Caco-2 (cell line): ENCODE measurements at regions of chr10 and their contacts with region 1.

Region 1: DNA sequence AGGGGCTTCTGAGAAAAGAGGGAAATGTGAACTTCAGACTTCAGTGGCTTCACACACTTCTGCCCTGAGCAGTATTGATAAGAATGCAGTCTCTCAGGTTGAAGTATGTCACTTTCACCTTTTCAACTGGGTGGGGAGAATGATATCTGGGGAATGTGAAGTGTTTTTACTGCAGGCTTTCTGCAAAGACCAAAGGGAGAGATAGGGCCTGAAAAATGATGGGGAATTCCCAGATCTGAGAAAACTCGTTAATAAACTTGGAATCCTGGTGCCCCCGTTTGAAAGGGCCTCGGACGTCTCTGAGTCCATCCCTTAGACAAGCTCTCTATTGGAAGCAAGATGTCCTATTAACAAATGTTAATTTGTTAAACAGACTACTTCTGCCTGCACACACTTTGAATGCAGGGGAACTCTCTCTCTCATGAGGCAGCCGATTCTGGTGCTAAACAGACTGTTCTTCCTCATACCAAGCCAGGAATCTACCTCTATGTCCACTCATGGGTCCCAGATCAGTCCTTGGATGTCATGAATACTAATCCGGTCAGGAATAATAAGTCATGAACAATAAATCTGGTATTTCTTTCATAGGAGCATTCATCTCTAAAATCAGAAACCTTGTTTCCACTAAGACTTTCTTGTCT is 193.6 kb downstream of the JCAD start:
- DNase-seq: peak; percentile 89 to 92
- H3K4me3 ChIP-seq: no peak overlapping the region
- H3K4me3 Mint-ChIP-seq: peak overlapping the region; percentile 42
- H3K27ac Mint-ChIP-seq: peak overlapping the region; percentile 95
- H3K4me1 ChIP-seq: peaks cover 64% of the 10 kb centered on the region
- H3K4me1 Mint-ChIP-seq: peaks cover 47% of the 10 kb centered on the region
- H3K27me3 ChIP-seq: no peaks in the 10 kb centered on the region
- H3K27me3 Mint-ChIP-seq: no peaks in the 10 kb centered on the region
- CTCF ChIP-seq: no peak

Region 2: DNA sequence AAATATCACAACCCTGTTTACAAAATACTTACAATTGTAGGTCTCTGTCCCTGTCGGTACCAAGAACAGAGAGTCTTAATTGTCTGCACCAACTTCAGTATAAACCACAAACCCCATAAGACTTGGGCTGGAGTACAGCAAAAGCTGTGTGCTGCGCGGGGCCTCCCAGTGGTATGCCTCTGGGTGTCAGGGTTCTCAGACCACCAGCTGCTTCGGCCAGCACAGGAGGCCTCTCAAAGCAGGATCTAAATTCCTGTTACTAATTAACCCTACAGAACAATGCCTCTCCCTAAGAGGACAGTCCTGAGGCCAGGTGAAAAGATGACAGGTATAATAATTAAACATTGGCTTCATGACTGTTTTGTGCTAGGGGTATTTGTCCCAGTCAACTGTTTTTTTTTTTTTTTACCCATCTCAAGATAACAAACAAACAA is 230.1 kb before region 1 on chr10:
- CTCF ChIA-PET with region 1: no interaction called
- POLR2A ChIA-PET with region 1: no interaction called
- intact Hi-C with region 1: loop called (anchors 2 kb)
- DNase-seq: peak; percentile 88 to 93
- H3K4me3 ChIP-seq: peak overlapping the region; percentile 23
- H3K4me3 Mint-ChIP-seq: peak overlapping the region; percentile 69
- H3K27ac Mint-ChIP-seq: peak overlapping the region; percentile 85
- H3K4me1 ChIP-seq: peaks cover 38% of the 10 kb centered on the region
- H3K4me1 Mint-ChIP-seq: peaks cover 48% of the 10 kb centered on the region
- H3K27me3 ChIP-seq: no peaks in the 10 kb centered on the region
- H3K27me3 Mint-ChIP-seq: no peaks in the 10 kb centered on the region
- CTCF ChIP-seq: peak in 1 of 2 experiments; percentile 50

Region 3: DNA sequence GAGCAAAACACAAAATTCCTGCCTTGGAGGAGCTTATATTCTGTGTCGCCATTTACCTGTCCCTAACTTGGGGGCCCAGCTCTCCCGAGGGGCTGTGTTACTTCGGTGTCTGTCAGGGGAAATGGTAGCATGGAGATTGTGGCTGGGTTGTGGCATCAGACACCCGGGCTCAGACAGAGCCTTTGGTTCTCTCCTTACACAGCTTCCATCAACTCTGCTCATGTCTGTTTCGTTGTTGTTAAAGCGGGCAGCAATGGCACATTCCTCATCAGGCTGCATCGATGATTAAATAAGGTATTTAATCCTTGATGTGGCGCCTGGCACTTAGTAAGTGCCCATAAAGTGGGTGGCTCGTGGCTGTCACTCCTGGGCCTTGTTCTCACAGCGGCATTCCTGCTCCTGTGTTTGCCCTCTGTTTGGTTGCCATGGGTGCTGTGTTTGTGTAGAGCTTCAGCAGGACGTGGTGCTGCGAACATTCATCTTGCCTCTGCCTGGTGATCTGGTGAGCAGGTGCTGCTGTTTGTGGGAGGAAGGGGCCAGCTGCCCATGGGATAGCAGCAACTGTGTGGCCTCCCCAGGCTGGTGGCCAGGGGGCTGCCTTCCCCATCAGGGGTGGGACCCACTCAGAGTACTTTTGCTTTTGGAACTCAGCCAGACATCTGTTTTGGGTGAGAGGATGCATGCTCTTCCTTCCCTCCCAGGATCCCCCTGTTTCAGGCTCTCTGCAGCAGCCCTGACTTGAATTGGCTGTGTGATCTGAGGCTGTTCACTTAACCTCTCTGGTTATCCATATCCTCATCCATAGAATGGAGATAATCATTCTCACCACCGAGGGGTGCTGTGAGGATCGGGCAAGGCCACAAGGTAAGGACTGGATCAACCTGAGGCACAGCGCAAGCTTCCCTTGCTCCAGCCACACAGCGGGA is 23.8 kb before region 1 on chr10:
- CTCF ChIA-PET with region 1: no interaction called
- POLR2A ChIA-PET with region 1: interaction called, 3 read pairs
- intact Hi-C with region 1: loop called (anchors 1 kb)
- DNase-seq: peak; percentile 79 to 81
- H3K4me3 ChIP-seq: no peak overlapping the region
- H3K4me3 Mint-ChIP-seq: peak overlapping the region; percentile 31
- H3K27ac Mint-ChIP-seq: peak overlapping the region; percentile 93
- H3K4me1 ChIP-seq: peaks cover 47% of the 10 kb centered on the region
- H3K4me1 Mint-ChIP-seq: peaks cover 52% of the 10 kb centered on the region
- H3K27me3 ChIP-seq: no peaks in the 10 kb centered on the region
- H3K27me3 Mint-ChIP-seq: no peaks in the 10 kb centered on the region
- CTCF ChIP-seq: no peak

Region 4: DNA sequence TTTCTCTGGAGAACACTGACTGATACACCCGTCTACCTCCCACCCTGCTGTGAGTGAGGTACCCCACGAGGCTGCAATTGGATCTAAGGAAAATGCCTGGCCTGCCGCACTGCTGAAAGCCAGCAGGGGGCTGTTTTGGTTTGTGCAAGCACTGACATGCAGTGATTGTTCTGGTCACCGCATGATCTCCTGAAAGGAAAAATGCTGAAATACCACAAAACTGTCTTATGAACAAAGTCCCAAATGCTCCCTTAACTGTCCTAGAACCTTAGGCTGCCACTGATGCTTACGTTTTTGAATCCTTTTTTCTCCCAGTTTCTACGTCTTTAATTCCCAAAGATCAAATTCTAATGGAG is 60.9 kb after region 1 on chr10:
- CTCF ChIA-PET with region 1: no interaction called
- POLR2A ChIA-PET with region 1: no interaction called
- intact Hi-C with region 1: loop called (anchors 2 kb)
- DNase-seq: peak in 1 of 2 experiments; percentile 42
- H3K4me3 ChIP-seq: no peak overlapping the region
- H3K4me3 Mint-ChIP-seq: no peak overlapping the region
- H3K27ac Mint-ChIP-seq: no peak overlapping the region
- H3K4me1 ChIP-seq: peaks cover 23% of the 10 kb centered on the region
- H3K4me1 Mint-ChIP-seq: peaks cover 37% of the 10 kb centered on the region
- H3K27me3 ChIP-seq: no peaks in the 10 kb centered on the region
- H3K27me3 Mint-ChIP-seq: no peaks in the 10 kb centered on the region
- CTCF ChIP-seq: peak; percentile 46 to 60

Region 5: DNA sequence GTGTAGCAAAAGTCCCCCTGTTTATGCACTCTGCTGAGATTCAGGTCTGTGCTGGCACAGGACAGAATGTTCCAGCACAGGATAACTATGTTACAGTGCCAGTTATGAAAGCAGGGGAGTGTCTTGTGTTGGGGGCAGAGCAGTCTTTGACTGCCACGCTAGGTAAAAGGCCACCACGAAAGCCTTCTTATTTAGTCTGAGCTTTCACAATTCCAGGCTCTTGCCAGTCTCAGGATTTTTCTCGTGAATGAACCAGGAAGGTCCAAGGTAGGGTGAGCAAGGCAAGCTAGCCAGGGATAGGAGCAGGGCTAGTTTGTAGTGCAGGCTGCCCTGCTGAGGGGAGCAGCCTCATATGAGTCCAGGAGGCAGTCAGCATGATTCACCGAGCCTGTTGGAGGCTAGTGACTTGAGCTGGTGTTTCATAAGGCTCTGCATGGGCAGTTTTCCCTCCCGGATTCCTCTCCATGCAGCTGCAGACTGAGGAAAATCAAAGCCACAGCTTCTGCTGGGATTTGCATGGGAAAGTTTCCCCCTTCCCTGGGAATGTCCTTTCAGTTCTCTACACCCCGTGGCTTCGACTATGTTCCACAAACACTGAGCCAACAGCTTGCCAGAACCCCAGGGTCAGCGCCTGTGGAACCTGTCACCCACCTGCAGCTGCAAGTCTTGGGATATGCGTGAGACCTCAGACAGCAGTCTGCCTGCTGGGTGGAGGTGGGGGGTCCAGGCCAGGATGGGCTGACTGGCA is 81.3 kb after region 1 on chr10:
- CTCF ChIA-PET with region 1: no interaction called
- POLR2A ChIA-PET with region 1: no interaction called
- intact Hi-C with region 1: loop called (anchors 5 kb)
- DNase-seq: peak in 1 of 2 experiments; percentile 13
- H3K4me3 ChIP-seq: no peak overlapping the region
- H3K4me3 Mint-ChIP-seq: no peak overlapping the region
- H3K27ac Mint-ChIP-seq: no peak overlapping the region
- H3K4me1 ChIP-seq: peaks cover 4% of the 10 kb centered on the region; the same call in 1 of the 2 replicates
- H3K4me1 Mint-ChIP-seq: no peaks in the 10 kb centered on the region
- H3K27me3 ChIP-seq: no peaks in the 10 kb centered on the region
- H3K27me3 Mint-ChIP-seq: no peaks in the 10 kb centered on the region
- CTCF ChIP-seq: no peak